Cardiac septum (tissue), 1 donor: ENCODE measurements at regions of chr1 and their contacts with region 1.

Region 1: GRCh38 chr1:45303582-45304310 is 22.9 kb upstream of the HPDL start:
- DNase-seq: peak; percentile 99

Region 2: GRCh38 chr1:44799770-44800584 is 503.8 kb before region 1 on chr1 and contains the start of gene PLK3:
- intact Hi-C with region 1: loop called (anchors 10 kb)
- DNase-seq: peak; percentile 100
- total RNA-seq, gene PLK3: 8.4 TPM

Region 3: DNA sequence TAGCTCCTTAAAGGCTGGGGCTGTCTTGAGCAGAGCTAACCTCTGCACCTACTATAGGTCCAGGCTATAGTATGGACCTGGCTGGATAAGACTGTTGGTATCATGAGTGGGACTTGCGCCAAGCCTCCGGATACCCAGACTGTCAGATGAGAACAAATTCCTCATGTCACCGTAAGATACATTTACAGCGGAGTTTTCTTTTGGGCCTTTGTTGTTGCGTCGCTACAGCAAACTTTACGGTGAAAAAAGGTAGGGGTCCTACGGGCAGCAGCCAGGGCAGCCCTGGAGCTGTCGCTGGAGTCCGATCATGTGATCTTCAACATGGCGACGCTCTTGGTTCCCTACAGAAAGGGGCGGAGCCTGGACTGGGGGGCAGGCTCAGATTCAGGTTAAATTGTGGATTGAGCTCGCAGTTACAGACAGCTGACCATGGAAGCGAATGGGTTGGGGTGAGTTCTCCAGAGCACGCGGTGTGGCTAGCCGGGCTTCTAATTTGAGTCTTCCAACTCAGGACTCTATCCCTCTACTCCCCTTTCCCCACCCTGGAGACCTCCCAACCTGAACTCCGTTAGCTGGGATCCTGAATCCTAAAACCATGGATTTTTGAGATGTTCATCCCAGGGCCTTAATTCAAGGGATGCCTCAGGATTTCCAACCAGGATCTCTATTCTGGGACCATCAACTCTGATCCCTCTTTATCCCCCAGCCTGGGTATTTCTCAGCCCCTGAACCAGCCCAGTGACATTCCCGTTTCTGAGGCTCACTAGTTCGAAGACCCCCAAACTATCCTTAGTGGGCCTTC is 291.7 kb before region 1 on chr1 and contains the start of gene UROD:
- intact Hi-C with region 1: loop called (anchors 1 kb)
- DNase-seq: peak; percentile 94
- total RNA-seq, gene UROD: 70.3 TPM

Region 4: GRCh38 chr1:45272983-45273382 is 30.8 kb before region 1 on chr1:
- intact Hi-C with region 1: no loop called
- DNase-seq: no peak

Region 5: GRCh38 chr1:45339789-45340570 is 36.2 kb after region 1 on chr1 and contains the starts of genes MUTYH and TOE1:
- intact Hi-C with region 1: loop called (anchors 1 kb)
- DNase-seq: peak; percentile 96
- total RNA-seq, gene MUTYH: 11.2 TPM
- total RNA-seq, gene TOE1: 3.5 TPM

Region 6: GRCh38 chr1:45359882-45360513 is 56.3 kb after region 1 on chr1:
- intact Hi-C with region 1: no loop called
- DNase-seq: no peak

Region 7: DNA sequence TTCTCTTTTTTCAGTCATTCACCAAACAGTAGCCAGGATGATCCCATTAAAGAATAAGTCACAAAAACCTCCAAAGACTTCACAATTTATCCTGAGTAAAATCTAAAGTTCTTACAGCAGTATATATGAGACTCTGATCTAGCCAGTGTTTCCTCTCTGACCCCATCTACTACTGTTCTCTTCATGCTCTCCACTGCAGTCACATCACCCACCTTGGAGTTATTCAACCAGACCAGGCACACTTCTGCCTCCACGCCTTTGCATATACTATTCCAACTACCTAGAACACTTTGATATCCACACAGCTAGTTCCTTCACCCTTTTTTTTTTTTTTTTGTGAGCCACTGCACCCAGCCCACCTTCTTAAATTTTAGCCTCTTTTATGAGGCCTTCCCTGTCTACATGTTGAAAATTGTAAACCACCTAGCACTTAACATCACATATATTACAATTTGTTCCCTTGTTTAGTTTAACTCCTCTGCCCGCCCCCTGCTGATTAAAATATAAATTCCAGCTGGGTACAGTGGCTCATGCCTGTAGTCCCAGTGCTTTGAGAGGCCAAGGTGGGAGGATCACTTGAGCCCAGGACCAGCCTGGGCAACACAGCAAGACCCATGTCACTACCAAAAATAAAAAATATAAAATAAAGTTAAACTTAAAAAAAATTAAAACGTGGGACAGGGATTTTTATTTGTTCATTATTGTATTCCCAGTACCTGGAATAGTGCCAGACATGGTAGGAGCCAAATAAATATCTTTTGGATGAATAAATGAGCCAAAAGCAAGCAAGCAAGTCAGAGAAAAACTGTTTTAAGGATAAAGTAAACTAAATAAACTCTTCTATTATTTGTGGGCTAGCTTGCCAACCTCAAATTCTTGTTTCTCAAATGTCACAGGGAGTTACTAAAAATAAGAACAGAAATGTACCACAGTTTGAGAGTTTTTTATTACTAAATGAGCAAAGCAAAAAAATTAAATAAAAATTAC is 71.7 kb after region 1 on chr1:
- intact Hi-C with region 1: no loop called
- DNase-seq: no peak